Activated T-helper 2 cell treated with anti-CD3 and anti-CD28 coated beads, Interferon-gamma antibody, Interleukin-2, Interleukin-4, amounts not matched to agents 10 μg/mL and 5 μg/mL and 100 μg/mL, durations not matched to agents 14 hours and 24 hours and 36 hours (primary cell): ENCODE measurements at regions of chr15 and their contacts with region 1.

Region 1: GRCh38 chr15:69755551-69756310 is 303.1 kb downstream of the RPLP1 start:
- DNase-seq: peak; percentile 84
- H3K4me3 Mint-ChIP-seq: peak overlapping the region; percentile 34
- H3K27ac Mint-ChIP-seq: peak overlapping the region; percentile 82
- H3K4me1 Mint-ChIP-seq: peaks cover 70% of the 10 kb centered on the region
- H3K27me3 Mint-ChIP-seq: no peaks in the 10 kb centered on the region

Region 2: GRCh38 chr15:69468241-69469121 is 287.2 kb before region 1 on chr15:
- intact Hi-C with region 1: loop called (anchors 5 kb)
- DNase-seq: peak; percentile 78
- H3K4me3 Mint-ChIP-seq: peak overlapping the region; percentile 5
- H3K27ac Mint-ChIP-seq: peak overlapping the region; percentile 75
- H3K4me1 Mint-ChIP-seq: peaks cover 22% of the 10 kb centered on the region
- H3K27me3 Mint-ChIP-seq: peaks cover 30% of the 10 kb centered on the region

Region 3: GRCh38 chr15:69576035-69576526 is 179.7 kb before region 1 on chr15:
- intact Hi-C with region 1: loop called (anchors 1 kb)
- DNase-seq: peak; percentile 38
- H3K4me3 Mint-ChIP-seq: no peak overlapping the region
- H3K27ac Mint-ChIP-seq: no peak overlapping the region
- H3K4me1 Mint-ChIP-seq: peaks cover 29% of the 10 kb centered on the region
- H3K27me3 Mint-ChIP-seq: peaks cover 10% of the 10 kb centered on the region

Region 4: GRCh38 chr15:69666411-69666882 is 89.3 kb before region 1 on chr15:
- intact Hi-C with region 1: loop called (anchors 5 kb)
- DNase-seq: no peak
- H3K4me3 Mint-ChIP-seq: no peak overlapping the region
- H3K27ac Mint-ChIP-seq: no peak overlapping the region
- H3K4me1 Mint-ChIP-seq: peaks cover 31% of the 10 kb centered on the region
- H3K27me3 Mint-ChIP-seq: no peaks in the 10 kb centered on the region

Region 5: DNA sequence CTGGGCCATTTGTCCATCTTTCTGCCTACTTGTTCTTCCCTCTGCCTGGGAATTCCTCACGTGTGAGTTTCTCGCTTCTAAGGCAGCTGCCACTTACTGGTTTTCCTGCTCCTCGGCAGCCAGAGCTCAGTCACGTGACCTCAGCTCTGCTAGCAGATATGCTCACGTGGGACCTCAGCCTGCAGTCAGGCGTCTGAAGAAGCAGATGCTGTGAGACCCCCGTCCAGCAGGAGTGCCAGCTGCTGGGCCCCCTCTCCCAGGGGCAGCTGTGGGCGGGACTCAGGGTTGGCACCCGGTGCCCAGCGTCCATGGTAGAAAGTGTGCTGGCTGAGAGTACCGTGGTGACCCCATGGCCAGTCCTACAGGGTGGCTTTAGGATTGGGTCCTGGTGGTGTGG is 503.3 kb after region 1 on chr15:
- intact Hi-C with region 1: loop called (anchors 5 kb)
- DNase-seq: peak; percentile 37
- H3K4me3 Mint-ChIP-seq: no peak overlapping the region
- H3K27ac Mint-ChIP-seq: no peak overlapping the region
- H3K4me1 Mint-ChIP-seq: peaks cover 35% of the 10 kb centered on the region
- H3K27me3 Mint-ChIP-seq: peaks cover 46% of the 10 kb centered on the region

Region 6: DNA sequence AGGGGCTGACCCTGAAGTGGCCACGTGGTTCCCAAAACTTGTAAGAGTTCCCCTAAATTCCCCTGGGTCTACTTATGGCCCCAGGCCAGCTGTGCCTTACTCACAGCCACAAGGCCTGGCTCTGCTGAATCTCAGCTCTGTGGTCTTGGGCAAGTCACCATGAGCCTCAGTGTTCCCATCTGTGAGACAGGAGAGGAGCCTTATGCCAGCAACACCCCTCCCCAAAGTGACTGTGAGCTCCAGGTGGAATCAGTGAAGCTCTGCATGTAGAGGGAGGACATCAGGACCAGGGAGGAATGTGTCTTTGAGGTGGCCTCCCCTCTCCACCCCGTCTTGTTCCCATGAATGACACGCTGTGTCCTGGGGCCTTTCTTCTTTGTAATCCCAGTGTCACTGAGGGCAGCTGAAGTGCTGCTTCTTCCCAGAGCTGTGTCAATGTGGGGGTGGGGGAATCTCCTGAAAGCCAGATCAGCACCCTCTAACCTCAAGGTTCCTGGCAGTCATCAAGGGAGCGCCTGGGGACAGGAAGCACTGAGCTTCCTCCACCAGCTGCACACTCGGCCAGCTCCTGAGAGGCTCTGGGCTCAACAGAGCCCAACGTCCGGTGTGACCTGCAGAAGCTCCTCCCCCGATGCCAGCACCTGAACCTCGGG is 748.7 kb after region 1 on chr15:
- intact Hi-C with region 1: loop called (anchors 5 kb)
- DNase-seq: no peak
- H3K4me3 Mint-ChIP-seq: peak overlapping the region; percentile 14
- H3K27ac Mint-ChIP-seq: peak overlapping the region; percentile 64
- H3K4me1 Mint-ChIP-seq: peaks cover 63% of the 10 kb centered on the region
- H3K27me3 Mint-ChIP-seq: peaks cover 19% of the 10 kb centered on the region

Region 7: DNA sequence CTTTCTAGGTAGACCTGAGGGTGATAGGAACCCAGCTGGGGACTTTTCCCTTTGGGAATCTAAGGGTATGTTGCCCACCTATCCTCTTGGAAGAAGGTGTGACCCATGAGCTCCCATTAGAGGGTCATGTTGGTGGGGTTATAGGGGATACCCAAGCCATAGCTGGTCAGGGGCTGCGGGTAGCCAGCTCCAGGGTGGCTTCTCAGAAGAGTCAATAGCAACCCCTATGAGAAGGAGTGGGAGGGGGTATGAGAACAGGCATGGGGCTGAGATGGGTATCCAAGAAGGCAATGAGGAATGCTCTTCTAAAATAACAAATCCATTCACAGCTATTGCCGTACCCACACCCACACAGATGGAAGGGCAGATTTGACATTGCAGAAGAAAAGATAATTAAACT is 789.8 kb after region 1 on chr15:
- intact Hi-C with region 1: loop called (anchors 5 kb)
- DNase-seq: no peak
- H3K4me3 Mint-ChIP-seq: no peak overlapping the region
- H3K27ac Mint-ChIP-seq: no peak overlapping the region
- H3K4me1 Mint-ChIP-seq: peaks cover 31% of the 10 kb centered on the region
- H3K27me3 Mint-ChIP-seq: peaks cover 12% of the 10 kb centered on the region